ENCODE measurements at regions of chrX and their contacts with region 1.

Region 1: GRCh38 chrX:54808605-54809483 is 1.3 kb downstream of the MAGED2 start:
- DNase-seq: peak; percentile 92 to 94 (median 92)
- H3K4me3 ChIP-seq: peak overlapping the region; percentile 62 to 82 (median 72)
- H3K4me3 Mint-ChIP-seq: peak overlapping the region; percentile 88 to 94
- H3K27ac ChIP-seq: peak overlapping the region; percentile 47 to 64
- H3K27ac Mint-ChIP-seq: peak overlapping the region; percentile 77 to 92 (median 89)
- H3K4me1 ChIP-seq: peaks cover 15 to 19% of the 10 kb centered on the region in 2 donors
- H3K4me1 Mint-ChIP-seq: peaks cover 20% of the 10 kb centered on the region
- H3K27me3 ChIP-seq: no peaks in the 10 kb centered on the region
- H3K27me3 Mint-ChIP-seq: peaks cover 2 to 10% (median 6%) of the 10 kb centered on the region in 3 donors
- CTCF ChIP-seq: no peak

Region 2: GRCh38 chrX:53683556-53684414 is 1125.1 kb before region 1 on chrX:
- intact Hi-C with region 1: loop called in 1 of 2 experiments (anchors 10 kb)
- DNase-seq: peak; percentile 96 to 97 (median 97)
- H3K4me3 ChIP-seq: peak overlapping the region; percentile 56 to 79 (median 72)
- H3K4me3 Mint-ChIP-seq: peak overlapping the region; percentile 82 to 87
- H3K27ac ChIP-seq: peak overlapping the region; percentile 89 to 97
- H3K27ac Mint-ChIP-seq: peak overlapping the region; percentile 94 to 98 (median 98)
- H3K4me1 ChIP-seq: peaks cover 22 to 28% of the 10 kb centered on the region in 2 donors
- H3K4me1 Mint-ChIP-seq: peaks cover 29% of the 10 kb centered on the region
- H3K27me3 ChIP-seq: no peaks in the 10 kb centered on the region
- H3K27me3 Mint-ChIP-seq: peaks cover 0 to 6% (median 2%) of the 10 kb centered on the region in 3 donors
- CTCF ChIP-seq: no peak

Region 3: GRCh38 chrX:54999717-55000598 is 191.1 kb after region 1 on chrX and contains the start of gene APEX2:
- intact Hi-C with region 1: loop called (anchors 10 kb)
- DNase-seq: peak; percentile 89 to 91 (median 90)
- H3K4me3 ChIP-seq: peak within 1 kb of the TSS; percentile 72 to 84 (median 80)
- H3K4me3 Mint-ChIP-seq: peak within 1 kb of the TSS; percentile 84 to 95
- H3K27ac ChIP-seq: peak within 1 kb of the TSS; percentile 89 to 96
- H3K27ac Mint-ChIP-seq: peak within 1 kb of the TSS; percentile 90 to 98 (median 95)
- H3K4me1 ChIP-seq: peaks cover 14 to 17% of the 10 kb centered on the region in 2 donors
- H3K4me1 Mint-ChIP-seq: peaks cover 18% of the 10 kb centered on the region
- H3K27me3 ChIP-seq: peaks cover 0 to 2% of the 10 kb centered on the region in 2 donors
- H3K27me3 Mint-ChIP-seq: peaks cover 0 to 7% (median 5%) of the 10 kb centered on the region in 3 donors
- CTCF ChIP-seq: no peak
- polyA plus RNA-seq, gene APEX2: 13.3 to 17.8 (median 14.4) TPM

Region 4: DNA sequence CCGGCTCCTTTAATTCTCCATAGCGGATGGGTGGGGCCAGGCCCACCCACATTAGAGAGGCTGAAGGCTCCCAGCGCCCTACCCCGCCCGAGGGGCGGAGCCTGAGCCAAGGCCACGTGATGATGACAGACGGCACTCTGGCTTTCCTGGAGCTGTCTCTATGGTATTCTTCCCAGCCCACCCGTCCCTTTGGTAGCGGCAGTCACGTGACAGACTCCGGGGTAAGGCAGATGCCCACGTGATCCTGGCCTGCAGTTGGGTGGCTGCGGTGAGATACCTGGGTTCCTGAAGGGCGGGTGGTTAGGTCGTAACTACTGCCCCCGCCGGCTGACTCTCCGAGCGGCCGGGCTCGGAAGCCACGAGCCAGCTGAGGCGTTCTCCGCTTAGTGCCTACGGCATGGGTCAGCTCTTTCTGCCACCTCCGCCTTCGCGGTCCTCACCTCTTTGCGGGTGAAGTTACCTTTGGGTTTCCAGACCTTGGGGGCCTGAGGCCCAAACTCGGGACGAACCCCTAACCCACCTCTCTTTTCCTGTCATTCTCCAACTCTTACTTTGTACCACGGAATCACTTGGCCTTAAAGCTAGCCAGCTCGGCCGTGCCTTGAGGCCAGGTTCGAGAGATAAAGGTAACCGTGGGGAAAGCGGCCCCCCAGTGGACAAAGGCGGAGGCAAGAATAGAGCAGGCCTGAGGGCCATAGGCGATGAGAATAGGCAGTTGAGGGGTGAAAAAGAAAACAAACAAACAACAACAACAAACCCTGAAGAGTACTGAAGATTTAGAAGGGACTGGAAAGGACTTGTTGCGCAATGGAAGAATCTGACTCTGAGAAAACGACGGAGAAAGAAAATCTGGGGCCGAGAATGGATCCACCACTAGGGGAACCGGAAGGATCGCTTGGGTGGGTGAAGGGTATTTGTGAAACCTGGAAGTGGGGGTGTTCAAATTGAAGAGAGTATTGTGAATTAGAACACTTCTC is 909.0 kb after region 1 on chrX and contains the start of gene RRAGB:
- intact Hi-C with region 1: loop called in 1 of 2 experiments (anchors 10 kb)
- DNase-seq: peak; percentile 87 to 90 (median 87)
- H3K4me3 ChIP-seq: peak within 1 kb of the TSS; percentile 61 to 80 (median 78)
- H3K4me3 Mint-ChIP-seq: peak within 1 kb of the TSS; percentile 84 to 93
- H3K27ac ChIP-seq: peak within 1 kb of the TSS; percentile 85 to 98
- H3K27ac Mint-ChIP-seq: peak within 1 kb of the TSS; percentile 90 to 96 (median 94)
- H3K4me1 ChIP-seq: peaks cover 32 to 47% of the 10 kb centered on the region in 2 donors
- H3K4me1 Mint-ChIP-seq: peaks cover 43% of the 10 kb centered on the region
- H3K27me3 ChIP-seq: no peaks in the 10 kb centered on the region
- H3K27me3 Mint-ChIP-seq: peaks cover 0 to 2% (median 0%) of the 10 kb centered on the region in 3 donors
- CTCF ChIP-seq: peak; percentile 47
- polyA plus RNA-seq, gene RRAGB: 8.7 to 27.8 (median 16.3) TPM

Measured in CD14-positive monocyte (primary cell).